Activated CD4-positive, alpha-beta T cell treated with anti-CD3 and anti-CD28 coated beads, Interleukin-2, amount 10 ng/mL, durations not matched to agents 7 days and 5 days (primary cell): ENCODE measurements at regions of chr17 and their contacts with region 1.

Region 1: DNA sequence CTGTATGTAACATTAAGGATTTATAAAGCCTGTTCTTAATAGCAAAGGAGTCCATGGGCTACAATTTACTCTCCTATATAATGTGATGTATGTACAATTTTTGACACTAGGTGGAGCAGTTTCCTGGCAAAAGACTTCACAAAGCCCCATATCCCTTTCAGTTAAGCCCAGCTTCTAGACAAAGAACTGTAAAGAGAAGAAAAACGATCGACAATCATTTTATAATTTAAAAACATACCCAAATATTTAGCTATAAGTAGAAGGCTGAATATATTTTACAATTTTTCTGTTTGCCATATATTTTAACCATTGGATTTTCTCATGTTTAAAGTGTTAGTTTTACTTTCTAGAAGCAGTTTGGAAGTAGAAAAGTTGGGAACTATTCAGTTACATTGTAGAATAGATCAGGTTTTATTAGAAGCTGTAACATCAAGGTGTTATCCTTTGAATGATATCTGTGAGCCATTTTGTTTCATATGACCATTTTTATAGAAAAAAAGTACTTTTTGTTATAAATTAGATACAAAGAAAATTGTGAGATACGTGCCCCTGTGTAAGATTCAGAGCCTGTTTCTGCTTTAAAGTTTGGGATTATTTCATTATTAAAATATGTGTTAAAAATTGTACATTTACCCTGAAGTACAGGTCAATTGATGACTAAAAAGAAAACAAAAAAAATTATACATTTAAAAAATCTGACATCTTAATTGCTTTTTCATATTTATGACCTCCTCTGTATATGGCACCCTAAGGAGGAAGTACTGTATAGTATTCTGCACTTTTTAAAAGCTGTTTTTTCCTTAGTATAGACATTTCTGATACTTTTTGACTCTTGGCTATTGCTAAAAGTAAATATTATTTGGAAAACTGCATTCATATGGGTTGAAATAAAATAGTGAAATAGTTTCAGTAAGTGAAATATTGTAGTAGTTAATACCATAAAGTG is 46.3 kb downstream of the VMP1 start:
- DNase-seq: peak; percentile 59
- H3K4me3 Mint-ChIP-seq: peak overlapping the region; percentile 66
- H3K27ac Mint-ChIP-seq: peak overlapping the region; percentile 90
- H3K4me1 Mint-ChIP-seq: peaks cover 63% of the 10 kb centered on the region
- H3K27me3 Mint-ChIP-seq: no peaks in the 10 kb centered on the region

Region 2: GRCh38 chr17:59668816-59669215 is 85.0 kb before region 1 on chr17:
- CTCF ChIA-PET with region 1: no interaction called
- POLR2A ChIA-PET with region 1: no interaction called
- DNase-seq: no peak
- H3K4me3 Mint-ChIP-seq: no peak overlapping the region
- H3K27ac Mint-ChIP-seq: no peak overlapping the region
- H3K4me1 Mint-ChIP-seq: peaks cover 24% of the 10 kb centered on the region
- H3K27me3 Mint-ChIP-seq: no peaks in the 10 kb centered on the region

Region 3: DNA sequence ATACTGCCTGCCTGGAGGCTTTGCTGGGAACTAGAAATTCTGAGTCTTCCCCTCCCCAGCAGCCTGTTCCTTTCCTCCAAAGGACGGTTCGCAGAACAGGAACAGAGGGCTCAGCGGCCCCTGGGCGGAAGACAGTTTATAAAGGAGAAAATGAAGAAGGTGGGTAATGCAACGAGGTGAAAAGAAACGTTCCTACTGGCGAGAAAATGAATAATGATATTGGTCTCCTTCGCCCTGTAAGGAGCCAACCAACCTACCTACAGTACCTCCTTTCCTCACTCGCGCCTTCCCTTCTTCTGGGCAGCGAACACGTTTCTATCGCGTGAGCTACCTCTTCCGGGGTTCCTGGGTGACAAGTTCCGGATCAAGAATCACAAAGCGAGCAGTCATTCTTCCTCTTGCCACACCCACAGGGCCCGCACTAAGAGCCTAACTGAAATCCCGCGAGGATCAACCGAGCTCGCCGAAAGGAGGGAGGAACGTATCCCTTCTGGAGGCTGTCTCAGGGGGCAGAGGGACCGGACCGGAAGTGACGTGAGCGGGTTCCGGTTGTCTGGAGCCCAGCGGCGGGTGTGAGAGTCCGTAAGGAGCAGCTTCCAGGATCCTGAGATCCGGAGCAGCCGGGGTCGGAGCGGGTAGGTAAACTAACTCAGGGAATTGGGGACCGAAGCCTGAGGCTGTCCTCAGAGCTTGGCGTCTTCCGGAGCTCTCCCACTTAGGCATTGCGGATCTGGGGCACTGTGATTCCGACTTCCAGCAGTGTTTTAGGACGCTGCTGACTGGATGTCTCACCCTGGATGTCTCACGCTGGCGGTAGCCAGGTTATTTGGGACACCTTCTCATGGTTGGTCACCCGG is 46.5 kb before region 1 on chr17 and contains the starts of genes PTRH2 and VMP1:
- CTCF ChIA-PET with region 1: interaction called, 10 read pairs
- POLR2A ChIA-PET with region 1: no interaction called
- DNase-seq: peak; percentile 96
- H3K4me3 Mint-ChIP-seq: peak within 1 kb of the TSS; percentile 94
- H3K27ac Mint-ChIP-seq: peak within 1 kb of the TSS; percentile 96
- H3K4me1 Mint-ChIP-seq: peaks cover 52% of the 10 kb centered on the region
- H3K27me3 Mint-ChIP-seq: no peaks in the 10 kb centered on the region
- total RNA-seq, gene PTRH2: 20.5 to 22.9 TPM
- total RNA-seq, gene VMP1: 194 to 213 TPM

Region 4: GRCh38 chr17:59725691-59726090 is 28.1 kb before region 1 on chr17:
- CTCF ChIA-PET with region 1: no interaction called
- POLR2A ChIA-PET with region 1: no interaction called
- DNase-seq: no peak
- H3K4me3 Mint-ChIP-seq: no peak overlapping the region
- H3K27ac Mint-ChIP-seq: no peak overlapping the region
- H3K4me1 Mint-ChIP-seq: peaks cover 15% of the 10 kb centered on the region
- H3K27me3 Mint-ChIP-seq: no peaks in the 10 kb centered on the region

Region 5: DNA sequence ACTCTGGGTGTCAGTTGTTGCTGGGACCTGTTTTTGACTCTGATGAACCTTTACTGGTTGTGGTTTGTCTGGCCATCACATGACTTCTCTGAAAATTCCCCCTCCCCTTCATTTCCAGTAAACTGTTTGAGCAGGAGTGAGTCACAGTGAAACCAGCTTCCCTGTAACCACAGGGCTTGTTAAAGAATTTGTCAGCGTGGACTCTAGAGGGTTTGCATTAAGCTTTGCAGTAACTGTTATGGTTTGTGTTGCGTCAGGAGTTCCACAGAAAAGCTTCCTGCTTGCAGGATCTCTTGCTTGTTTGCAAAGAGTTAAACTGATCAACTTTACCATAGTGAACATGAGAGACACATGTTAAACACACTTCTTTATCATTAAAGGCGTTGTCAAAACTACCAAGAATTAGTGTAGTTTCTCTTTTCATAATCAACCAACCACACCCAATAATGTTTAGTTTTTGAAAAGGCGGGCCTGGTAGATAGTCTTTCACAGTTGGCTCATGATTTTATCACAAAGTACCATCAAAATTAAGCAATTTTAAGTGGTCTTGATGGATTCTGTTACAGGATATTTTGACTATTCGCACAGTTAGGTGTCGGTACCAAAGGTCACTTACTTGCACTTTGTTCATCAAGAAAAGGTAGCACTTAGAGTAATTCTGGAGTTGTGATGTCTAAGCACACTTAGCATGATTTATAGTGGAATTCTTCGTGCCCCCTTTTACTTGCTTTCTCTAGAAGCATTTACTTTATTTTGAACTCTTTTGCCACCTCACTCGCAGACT is 32.9 kb after region 1 on chr17:
- CTCF ChIA-PET with region 1: interaction called, 6 read pairs
- POLR2A ChIA-PET with region 1: interaction called, 14 read pairs
- DNase-seq: peak; percentile 92
- H3K4me3 Mint-ChIP-seq: peak overlapping the region; percentile 73
- H3K27ac Mint-ChIP-seq: peak overlapping the region; percentile 93
- H3K4me1 Mint-ChIP-seq: peaks cover 63% of the 10 kb centered on the region
- H3K27me3 Mint-ChIP-seq: no peaks in the 10 kb centered on the region

Region 6: DNA sequence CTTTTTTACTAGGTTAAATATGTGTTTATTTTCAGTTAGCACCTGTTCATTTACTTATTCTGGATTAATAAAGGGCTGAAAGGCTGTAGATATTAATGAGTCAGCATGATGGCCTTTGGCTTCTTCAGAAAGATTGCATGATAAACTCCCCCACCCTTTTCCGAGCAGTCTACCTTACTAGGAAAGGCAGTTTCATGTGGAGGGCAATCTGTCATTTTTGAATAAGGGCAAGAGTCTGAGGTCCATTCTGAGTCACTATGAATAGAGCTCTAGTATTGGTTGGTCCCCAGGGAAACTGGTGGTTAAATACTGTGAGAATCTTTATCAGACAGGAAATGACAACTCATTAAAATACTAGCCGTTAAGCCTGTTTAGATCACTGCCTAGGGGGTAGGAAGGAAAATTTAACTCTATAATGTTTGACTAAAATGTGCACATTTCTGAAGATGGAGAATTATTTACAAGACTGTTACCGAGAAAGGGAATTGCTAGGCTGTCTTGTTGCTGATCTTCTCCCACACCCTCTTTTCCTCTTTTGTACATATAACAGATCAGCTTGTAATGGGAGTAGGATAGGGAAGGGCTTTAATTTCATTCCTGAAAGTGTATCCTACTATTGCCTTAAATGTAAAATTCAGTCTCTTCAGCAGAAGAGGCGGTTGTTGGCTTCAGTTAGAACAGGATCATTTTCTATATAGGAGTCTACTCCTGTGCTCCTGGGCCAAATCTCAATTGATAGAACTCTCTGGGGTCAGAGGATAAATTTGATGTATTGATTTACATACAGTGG is 75.6 kb after region 1 on chr17:
- CTCF ChIA-PET with region 1: interaction called, 7 read pairs
- POLR2A ChIA-PET with region 1: interaction called, 13 read pairs
- DNase-seq: peak; percentile 59
- H3K4me3 Mint-ChIP-seq: peak overlapping the region; percentile 71
- H3K27ac Mint-ChIP-seq: peak overlapping the region; percentile 96
- H3K4me1 Mint-ChIP-seq: peaks cover 83% of the 10 kb centered on the region
- H3K27me3 Mint-ChIP-seq: no peaks in the 10 kb centered on the region

Region 7: GRCh38 chr17:59837308-59838051 is 83.7 kb after region 1 on chr17:
- CTCF ChIA-PET with region 1: interaction called, 24 read pairs
- POLR2A ChIA-PET with region 1: interaction called, 61 read pairs
- DNase-seq: peak; percentile 91
- H3K4me3 Mint-ChIP-seq: peak overlapping the region; percentile 93
- H3K27ac Mint-ChIP-seq: peak overlapping the region; percentile 98
- H3K4me1 Mint-ChIP-seq: peaks cover 45% of the 10 kb centered on the region
- H3K27me3 Mint-ChIP-seq: no peaks in the 10 kb centered on the region

Region 8: DNA sequence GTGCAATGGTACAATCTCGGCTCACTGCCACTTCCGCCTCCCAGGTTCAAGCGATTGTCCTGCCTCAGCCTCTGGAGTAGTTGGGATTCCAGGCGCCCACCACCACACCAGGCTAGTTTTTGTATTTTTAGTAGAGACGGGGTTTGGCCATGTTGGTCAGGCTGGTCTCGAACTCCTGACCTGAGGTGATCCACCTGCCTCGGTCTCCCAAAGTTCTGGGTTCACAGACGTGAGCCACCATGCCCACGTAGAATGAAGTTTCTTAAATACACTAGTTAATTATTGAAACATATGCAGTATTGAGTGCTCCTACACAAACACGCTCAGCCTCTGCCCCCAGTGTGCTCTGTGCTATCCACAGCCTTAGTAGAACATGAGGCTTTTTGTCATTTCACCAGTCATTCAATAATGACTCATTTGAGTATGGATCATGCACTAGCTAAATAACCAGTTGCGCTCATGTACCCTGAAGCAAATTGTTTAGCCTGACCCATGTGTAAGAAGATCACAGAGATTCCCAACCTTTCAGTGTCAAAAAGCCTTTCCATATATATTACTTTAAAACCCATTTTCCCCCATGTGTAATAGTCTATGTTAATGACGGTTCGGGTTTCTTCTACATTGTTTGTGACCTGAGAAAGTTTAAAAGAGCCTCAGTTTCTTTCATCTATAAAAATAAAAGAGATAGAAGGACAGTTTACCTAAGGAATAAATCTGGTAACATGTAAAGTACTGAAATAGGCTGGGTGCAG is 89.3 kb after region 1 on chr17:
- CTCF ChIA-PET with region 1: interaction called, 24 read pairs
- POLR2A ChIA-PET with region 1: interaction called, 61 read pairs
- DNase-seq: no peak
- H3K4me3 Mint-ChIP-seq: peak overlapping the region; percentile 93
- H3K27ac Mint-ChIP-seq: peak overlapping the region; percentile 98
- H3K4me1 Mint-ChIP-seq: peaks cover 60% of the 10 kb centered on the region
- H3K27me3 Mint-ChIP-seq: no peaks in the 10 kb centered on the region

Region 9: GRCh38 chr17:59859444-59860025 is 105.7 kb after region 1 on chr17:
- CTCF ChIA-PET with region 1: interaction called, 45 read pairs
- POLR2A ChIA-PET with region 1: interaction called, 8 read pairs
- DNase-seq: peak; percentile 44
- H3K4me3 Mint-ChIP-seq: no peak overlapping the region
- H3K27ac Mint-ChIP-seq: peak overlapping the region; percentile 25
- H3K4me1 Mint-ChIP-seq: peaks cover 24% of the 10 kb centered on the region
- H3K27me3 Mint-ChIP-seq: no peaks in the 10 kb centered on the region